ENCODE measurements at regions of chr18 and their contacts with region 1.

Region 1: GRCh38 chr18:51153659-51154371 is 43.7 kb downstream of the MEX3C start:
- DNase-seq: peak; percentile 62
- ATAC-seq: peak; percentile 83
- H3K4me3 ChIP-seq: peak overlapping the region; percentile 61
- H3K27ac ChIP-seq: peak overlapping the region; percentile 98
- H3K4me1 ChIP-seq: peaks cover 35% of the 10 kb centered on the region
- H3K27me3 ChIP-seq: no peaks in the 10 kb centered on the region
- CTCF ChIP-seq: no peak
- EP300 ChIP-seq: peak; percentile 68 to 75
- POLR2A ChIP-seq: peak; percentile 84
- RAD21 ChIP-seq: no peak

Region 2: GRCh38 chr18:51171223-51171622 is 17.4 kb after region 1 on chr18:
- CTCF ChIA-PET with region 1: interaction called, 4 read pairs
- POLR2A ChIA-PET with region 1: interaction called, 3 read pairs
- RAD21 ChIA-PET with region 1: interaction called, 4 read pairs
- SMC1A ChIA-PET with region 1: interaction called, 5 read pairs
- in situ Hi-C with region 1: no loop called
- intact Hi-C with region 1: loop called (anchors 2 kb)
- DNase-seq: no peak
- ATAC-seq: peak; percentile 78
- H3K4me3 ChIP-seq: no peak overlapping the region
- H3K27ac ChIP-seq: peak overlapping the region; percentile 10
- H3K4me1 ChIP-seq: peaks cover 22% of the 10 kb centered on the region
- H3K27me3 ChIP-seq: no peaks in the 10 kb centered on the region
- CTCF ChIP-seq: no peak
- EP300 ChIP-seq: no peak
- POLR2A ChIP-seq: no peak
- RAD21 ChIP-seq: no peak

Region 3: DNA sequence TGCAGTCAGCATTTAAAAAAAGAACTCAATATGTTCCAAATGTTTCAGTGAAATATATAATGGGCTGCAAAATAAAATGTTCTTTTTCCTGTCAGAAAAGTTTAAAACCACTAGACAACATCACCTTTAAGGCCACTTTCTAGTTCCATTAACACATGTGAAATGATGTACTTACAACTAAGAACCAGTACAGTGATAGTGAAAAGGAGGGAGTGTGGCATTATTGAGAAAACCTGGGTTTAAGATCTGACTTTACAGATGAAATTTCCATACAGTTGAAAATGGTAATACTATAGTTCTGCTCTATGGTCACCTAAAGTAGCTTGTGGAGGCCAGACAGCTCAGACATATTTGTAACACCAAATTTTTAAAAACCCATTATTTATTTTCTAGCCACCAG is 29.0 kb after region 1 on chr18:
- CTCF ChIA-PET with region 1: no interaction called
- POLR2A ChIA-PET with region 1: interaction called, 4 read pairs
- RAD21 ChIA-PET with region 1: interaction called, 16 read pairs
- SMC1A ChIA-PET with region 1: interaction called, 19 read pairs
- in situ Hi-C with region 1: no loop called
- intact Hi-C with region 1: no loop called
- DNase-seq: no peak
- ATAC-seq: peak; percentile 32
- H3K4me3 ChIP-seq: no peak overlapping the region
- H3K27ac ChIP-seq: no peak overlapping the region; the same call in 1 of the 2 replicates
- H3K4me1 ChIP-seq: peaks cover 16% of the 10 kb centered on the region
- H3K27me3 ChIP-seq: no peaks in the 10 kb centered on the region
- CTCF ChIP-seq: no peak
- EP300 ChIP-seq: no peak
- POLR2A ChIP-seq: no peak
- RAD21 ChIP-seq: no peak

Region 4: GRCh38 chr18:51188024-51188701 is 34.3 kb after region 1 on chr18:
- CTCF ChIA-PET with region 1: interaction called, 6 read pairs
- POLR2A ChIA-PET with region 1: interaction called, 6 read pairs
- RAD21 ChIA-PET with region 1: interaction called, 16 read pairs
- SMC1A ChIA-PET with region 1: interaction called, 60 read pairs
- in situ Hi-C with region 1: no loop called
- intact Hi-C with region 1: no loop called
- DNase-seq: no peak
- ATAC-seq: peak; percentile 49
- H3K4me3 ChIP-seq: peak overlapping the region; percentile 23
- H3K27ac ChIP-seq: peak overlapping the region; percentile 64
- H3K4me1 ChIP-seq: peaks cover 31% of the 10 kb centered on the region
- H3K27me3 ChIP-seq: no peaks in the 10 kb centered on the region
- CTCF ChIP-seq: no peak
- EP300 ChIP-seq: no peak
- POLR2A ChIP-seq: no peak
- RAD21 ChIP-seq: no peak

Region 5: GRCh38 chr18:51197661-51198424 is 44.0 kb after region 1 on chr18 and contains the start of gene MEX3C:
- CTCF ChIA-PET with region 1: interaction called, 10 read pairs
- POLR2A ChIA-PET with region 1: interaction called, 9 read pairs
- RAD21 ChIA-PET with region 1: interaction called, 31 read pairs
- SMC1A ChIA-PET with region 1: interaction called, 60 read pairs
- in situ Hi-C with region 1: no loop called
- intact Hi-C with region 1: loop called (anchors 2 kb)
- DNase-seq: peak; percentile 95
- ATAC-seq: peak; percentile 83
- H3K4me3 ChIP-seq: peak within 1 kb of the TSS; percentile 69
- H3K27ac ChIP-seq: peak within 1 kb of the TSS; percentile 95
- H3K4me1 ChIP-seq: no peaks in the 10 kb centered on the region
- H3K27me3 ChIP-seq: no peaks in the 10 kb centered on the region
- CTCF ChIP-seq: peak in 2 of 3 experiments; percentile 9 to 23; a peak in 2 of 6 replicates
- EP300 ChIP-seq: no peak
- POLR2A ChIP-seq: peak; percentile 77
- RAD21 ChIP-seq: no peak
- polyA plus RNA-seq, gene MEX3C: 7.9 to 9.9 TPM

Region 6: GRCh38 chr18:51739044-51739666 is 585.3 kb after region 1 on chr18:
- CTCF ChIA-PET with region 1: no interaction called
- POLR2A ChIA-PET with region 1: no interaction called
- RAD21 ChIA-PET with region 1: interaction called, 3 read pairs
- SMC1A ChIA-PET with region 1: no interaction called
- in situ Hi-C with region 1: loop called (anchors 10 kb)
- intact Hi-C with region 1: no loop called
- DNase-seq: no peak
- ATAC-seq: peak; percentile 91
- H3K4me3 ChIP-seq: no peak overlapping the region
- H3K27ac ChIP-seq: no peak overlapping the region
- H3K4me1 ChIP-seq: no peaks in the 10 kb centered on the region; the same call in 1 of the 2 replicates
- H3K27me3 ChIP-seq: no peaks in the 10 kb centered on the region
- CTCF ChIP-seq: no peak
- EP300 ChIP-seq: peak; percentile 70 to 87
- POLR2A ChIP-seq: no peak
- RAD21 ChIP-seq: no peak